ENCODE measurements at regions of chr2 and their contacts with region 1.

Region 1: GRCh38 chr2:157876066-157876787 is at the start of gene ACVR1:
- DNase-seq: peak; percentile 99
- H3K4me3 Mint-ChIP-seq: peak within 1 kb of the TSS; percentile 83
- H3K27ac Mint-ChIP-seq: peak within 1 kb of the TSS; percentile 32
- H3K4me1 Mint-ChIP-seq: peaks cover 11% of the 10 kb centered on the region
- H3K27me3 Mint-ChIP-seq: no peaks in the 10 kb centered on the region
- CTCF ChIP-seq: peak; percentile 24
- total RNA-seq, gene ACVR1: 26.4 and 41.4 TPM in 2 replicates

Region 2: DNA sequence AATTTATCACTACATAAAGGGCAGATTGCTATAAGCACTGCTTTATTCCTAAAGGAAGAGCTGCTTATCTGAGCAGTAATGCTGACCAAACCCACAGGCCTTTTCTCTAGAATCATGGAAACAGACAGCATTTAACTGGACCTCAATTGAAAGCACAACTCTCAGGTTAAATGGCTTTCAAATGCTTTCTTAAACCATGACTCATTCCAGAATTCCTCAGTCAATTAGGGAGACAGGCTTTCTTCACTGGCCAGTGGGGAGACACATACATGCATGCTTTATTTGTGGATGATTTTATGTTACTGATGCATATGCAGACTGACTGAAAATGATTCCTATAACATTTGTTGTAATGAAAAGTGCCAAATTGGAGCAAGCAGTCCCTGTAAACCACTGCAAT is 114.7 kb before region 1 on chr2:
- CTCF ChIA-PET with region 1: no interaction called
- POLR2A ChIA-PET with region 1: no interaction called
- intact Hi-C with region 1: no loop called
- DNase-seq: no peak
- H3K4me3 Mint-ChIP-seq: no peak overlapping the region
- H3K27ac Mint-ChIP-seq: no peak overlapping the region
- H3K4me1 Mint-ChIP-seq: peaks cover 6% of the 10 kb centered on the region
- H3K27me3 Mint-ChIP-seq: no peaks in the 10 kb centered on the region
- CTCF ChIP-seq: no peak

Region 3: DNA sequence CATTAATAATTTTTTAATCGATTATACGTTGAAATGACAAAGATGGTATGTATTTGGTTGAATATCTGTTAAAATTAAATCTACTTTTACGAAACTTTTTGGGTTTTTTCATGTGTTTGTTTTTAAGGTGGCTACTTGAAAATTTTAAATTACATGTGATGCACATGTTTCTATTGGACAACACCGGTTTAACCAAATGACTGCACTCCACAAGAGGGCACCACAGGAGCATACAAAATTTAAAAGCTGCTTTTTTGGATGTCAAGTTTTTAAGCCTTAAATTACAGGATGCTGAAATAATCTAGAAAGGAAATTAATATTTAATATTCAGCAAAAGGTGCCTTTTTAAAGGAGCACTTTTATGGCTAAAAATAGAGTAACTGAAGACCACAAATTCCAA is 98.8 kb before region 1 on chr2:
- CTCF ChIA-PET with region 1: interaction called, 3 read pairs
- POLR2A ChIA-PET with region 1: interaction called, 3 read pairs
- intact Hi-C with region 1: loop called (anchors 2 kb)
- DNase-seq: peak; percentile 58
- H3K4me3 Mint-ChIP-seq: no peak overlapping the region
- H3K27ac Mint-ChIP-seq: no peak overlapping the region
- H3K4me1 Mint-ChIP-seq: no peaks in the 10 kb centered on the region
- H3K27me3 Mint-ChIP-seq: no peaks in the 10 kb centered on the region
- CTCF ChIP-seq: peak; percentile 54

Region 4: DNA sequence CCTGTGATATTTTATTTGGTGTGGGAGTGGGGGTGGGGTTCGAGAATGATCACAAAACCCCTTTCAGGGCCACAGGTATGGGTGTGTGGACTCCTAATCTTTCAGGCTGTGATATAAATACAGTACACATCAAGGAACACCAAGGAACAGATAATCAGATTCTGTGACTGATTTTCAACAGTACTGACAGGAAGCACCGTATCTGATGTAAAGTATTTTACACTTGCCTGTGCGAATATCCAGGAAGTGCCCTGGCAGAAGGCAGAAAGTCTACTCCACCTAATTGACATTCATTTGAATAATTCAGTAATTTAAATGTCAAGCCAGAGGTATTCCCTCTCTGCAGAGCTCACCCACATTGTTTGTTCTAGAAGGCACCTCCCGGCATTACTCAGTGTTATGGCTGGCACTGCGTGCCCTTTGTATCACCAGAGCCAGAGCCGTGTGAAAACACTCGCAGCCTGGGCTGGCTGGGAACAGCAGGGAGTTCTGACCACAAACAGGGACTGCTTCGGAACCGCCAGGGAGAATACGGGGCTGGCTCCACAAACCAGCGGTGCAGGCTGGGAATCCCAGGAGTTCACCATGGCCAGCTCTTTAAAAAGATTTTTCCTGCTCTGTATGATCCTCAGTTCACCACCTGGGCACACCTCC is 91.9 kb before region 1 on chr2:
- CTCF ChIA-PET with region 1: interaction called, 16 read pairs
- POLR2A ChIA-PET with region 1: interaction called, 88 read pairs
- intact Hi-C with region 1: loop called (anchors 1 kb)
- DNase-seq: peak; percentile 88
- H3K4me3 Mint-ChIP-seq: peak overlapping the region; percentile 66
- H3K27ac Mint-ChIP-seq: peak overlapping the region; percentile 79
- H3K4me1 Mint-ChIP-seq: peaks cover 41% of the 10 kb centered on the region
- H3K27me3 Mint-ChIP-seq: no peaks in the 10 kb centered on the region
- CTCF ChIP-seq: no peak

Region 5: DNA sequence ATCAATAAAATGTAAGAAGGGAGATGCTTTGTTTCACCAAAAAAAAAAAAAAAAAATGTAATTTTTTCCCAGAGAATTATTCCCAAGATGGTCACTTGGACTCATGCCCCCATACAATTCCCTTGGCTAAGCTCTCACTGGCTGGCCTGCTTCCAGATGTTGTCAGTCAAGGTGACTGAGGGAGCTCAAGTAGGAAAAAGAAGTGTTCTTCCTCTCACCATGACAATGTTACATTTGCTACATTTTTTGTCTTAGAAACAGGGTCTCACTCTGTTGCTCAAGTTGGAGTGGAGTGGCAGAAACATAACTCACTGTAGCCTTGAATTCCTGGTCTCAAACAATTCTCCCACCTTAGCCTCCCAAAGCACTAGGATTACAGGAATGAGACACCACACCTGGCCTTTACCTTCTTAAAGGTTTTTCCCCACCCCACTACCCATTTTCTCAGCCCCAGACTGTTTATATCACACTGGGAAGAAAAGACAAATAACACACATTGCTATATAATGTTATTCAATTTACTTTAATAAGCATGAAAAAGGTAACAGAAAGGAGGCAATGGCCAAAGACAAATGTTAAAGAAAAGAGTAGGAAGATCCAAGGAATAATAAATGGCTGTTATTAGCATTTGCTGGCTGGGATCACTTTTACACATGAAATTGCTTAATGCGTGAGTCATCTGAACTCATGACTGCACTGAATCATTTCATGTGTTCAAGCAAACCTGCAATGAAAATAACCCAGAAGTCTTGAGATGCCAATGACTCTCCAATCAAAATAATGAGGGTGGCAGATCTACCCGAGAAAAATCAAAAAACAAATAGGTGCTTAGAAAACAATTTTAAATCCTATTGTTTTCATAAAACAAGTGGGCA is 45.3 kb before region 1 on chr2:
- CTCF ChIA-PET with region 1: interaction called, 4 read pairs
- POLR2A ChIA-PET with region 1: interaction called, 34 read pairs
- intact Hi-C with region 1: loop called (anchors 2 kb)
- DNase-seq: peak; percentile 90
- H3K4me3 Mint-ChIP-seq: peak overlapping the region; percentile 47
- H3K27ac Mint-ChIP-seq: peak overlapping the region; percentile 96
- H3K4me1 Mint-ChIP-seq: peaks cover 24% of the 10 kb centered on the region
- H3K27me3 Mint-ChIP-seq: no peaks in the 10 kb centered on the region
- CTCF ChIP-seq: no peak

Region 6: DNA sequence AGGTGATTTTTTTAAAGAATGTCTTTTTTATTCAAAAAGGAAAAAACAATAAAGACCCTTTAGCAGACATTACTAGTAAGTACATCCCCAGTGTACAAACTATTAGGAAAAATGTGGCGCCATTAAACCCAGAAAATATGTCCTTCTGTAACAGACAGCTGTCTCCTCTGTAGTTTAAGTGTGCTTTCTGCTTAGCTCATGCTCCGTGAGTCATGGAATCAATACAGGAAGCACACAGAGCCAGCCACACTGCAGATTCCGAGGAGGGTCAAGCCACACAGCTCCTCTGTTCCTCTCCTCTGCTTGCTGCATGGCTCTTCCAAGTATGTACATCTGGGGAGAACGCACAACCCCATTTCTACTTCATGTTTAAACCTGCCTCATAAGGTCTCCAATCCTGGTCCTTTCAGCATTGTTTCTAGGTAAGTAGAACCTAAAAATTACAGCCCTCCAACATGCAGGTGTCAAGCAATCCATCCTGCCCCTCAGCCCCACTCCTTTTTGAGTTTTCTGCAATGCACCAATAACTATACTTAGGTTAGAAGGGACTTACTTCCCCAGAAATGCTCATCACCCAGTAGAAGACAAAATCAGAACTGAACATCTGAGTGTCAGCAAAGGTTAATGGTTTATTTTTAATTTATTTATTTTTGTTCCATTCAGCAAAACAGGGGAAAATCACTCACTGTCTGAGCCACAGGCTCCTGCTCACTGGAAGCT is 37.6 kb before region 1 on chr2:
- CTCF ChIA-PET with region 1: interaction called, 3 read pairs
- POLR2A ChIA-PET with region 1: interaction called, 34 read pairs
- intact Hi-C with region 1: no loop called
- DNase-seq: peak; percentile 67
- H3K4me3 Mint-ChIP-seq: no peak overlapping the region
- H3K27ac Mint-ChIP-seq: peak overlapping the region; percentile 71
- H3K4me1 Mint-ChIP-seq: peaks cover 29% of the 10 kb centered on the region
- H3K27me3 Mint-ChIP-seq: no peaks in the 10 kb centered on the region
- CTCF ChIP-seq: no peak

Region 7: GRCh38 chr2:157898591-157898996 is 22.4 kb after region 1 on chr2:
- CTCF ChIA-PET with region 1: interaction called, 6 read pairs
- POLR2A ChIA-PET with region 1: interaction called, 15 read pairs
- intact Hi-C with region 1: no loop called
- DNase-seq: peak; percentile 87
- H3K4me3 Mint-ChIP-seq: no peak overlapping the region
- H3K27ac Mint-ChIP-seq: peak overlapping the region; percentile 2
- H3K4me1 Mint-ChIP-seq: peaks cover 42% of the 10 kb centered on the region
- H3K27me3 Mint-ChIP-seq: no peaks in the 10 kb centered on the region
- CTCF ChIP-seq: no peak

Region 8: GRCh38 chr2:157936406-157936805 is 60.2 kb after region 1 on chr2:
- CTCF ChIA-PET with region 1: interaction called, 5 read pairs
- POLR2A ChIA-PET with region 1: interaction called, 17 read pairs
- intact Hi-C with region 1: no loop called
- DNase-seq: peak; percentile 19
- H3K4me3 Mint-ChIP-seq: no peak overlapping the region
- H3K27ac Mint-ChIP-seq: no peak overlapping the region
- H3K4me1 Mint-ChIP-seq: peaks cover 24% of the 10 kb centered on the region
- H3K27me3 Mint-ChIP-seq: no peaks in the 10 kb centered on the region
- CTCF ChIP-seq: no peak